MCF 10A (cell line): ENCODE measurements at regions of chr1 and their contacts with region 1.

Region 1: GRCh38 chr1:88180449-88181108 is 503.5 kb upstream of the PKN2 start:
- DNase-seq: peak; percentile 77
- H3K4me3 Mint-ChIP-seq: no peak overlapping the region
- H3K27ac Mint-ChIP-seq: no peak overlapping the region
- H3K4me1 Mint-ChIP-seq: peaks cover 6% of the 10 kb centered on the region
- H3K27me3 Mint-ChIP-seq: peaks cover 47% of the 10 kb centered on the region
- CTCF ChIP-seq: peak; percentile 89

Region 2: DNA sequence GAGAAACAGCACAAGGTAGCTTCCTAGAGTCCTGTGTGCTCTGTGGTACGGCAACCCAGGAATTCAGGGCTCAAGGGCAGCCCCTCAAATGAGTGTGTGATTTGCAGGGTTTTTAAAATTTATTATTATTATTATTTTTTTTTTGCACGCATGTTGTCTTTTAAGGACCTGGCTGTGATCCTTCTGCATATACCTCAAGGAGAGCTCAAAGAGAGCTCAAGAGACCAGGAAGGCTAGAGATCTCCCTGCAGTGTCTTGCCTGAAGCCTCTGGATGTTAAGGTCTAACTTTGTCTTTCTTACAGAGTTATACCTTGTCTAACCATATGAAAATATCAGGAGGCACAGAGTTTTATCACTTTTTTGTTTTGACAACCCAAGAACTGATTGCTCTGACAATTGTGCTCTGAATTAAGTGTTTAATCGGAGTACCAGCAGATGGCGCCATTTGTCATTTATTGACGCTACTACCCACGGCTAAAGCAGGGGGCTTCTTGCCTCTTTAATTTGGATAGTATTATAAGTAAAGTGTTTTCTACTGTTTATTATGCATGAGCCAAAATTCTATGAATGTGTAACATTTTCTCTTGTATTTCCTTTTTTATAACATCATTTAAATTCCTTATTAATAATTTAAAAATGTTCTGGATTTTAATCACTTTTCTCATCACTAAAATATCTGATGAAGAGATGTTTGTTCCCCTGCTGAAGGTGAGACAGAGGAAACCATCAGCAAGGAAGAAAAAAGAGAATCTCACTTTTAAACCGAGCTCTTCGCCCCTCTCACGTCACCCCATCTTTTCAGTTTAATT is 887.7 kb before region 1 on chr1:
- CTCF ChIA-PET with region 1: interaction called, 5 read pairs
- POLR2A ChIA-PET with region 1: no interaction called
- intact Hi-C with region 1: loop called (anchors 2 kb)
- DNase-seq: peak; percentile 69
- H3K4me3 Mint-ChIP-seq: no peak overlapping the region
- H3K27ac Mint-ChIP-seq: no peak overlapping the region
- H3K4me1 Mint-ChIP-seq: no peaks in the 10 kb centered on the region
- H3K27me3 Mint-ChIP-seq: peaks cover 25% of the 10 kb centered on the region
- CTCF ChIP-seq: peak; percentile 69

Region 3: DNA sequence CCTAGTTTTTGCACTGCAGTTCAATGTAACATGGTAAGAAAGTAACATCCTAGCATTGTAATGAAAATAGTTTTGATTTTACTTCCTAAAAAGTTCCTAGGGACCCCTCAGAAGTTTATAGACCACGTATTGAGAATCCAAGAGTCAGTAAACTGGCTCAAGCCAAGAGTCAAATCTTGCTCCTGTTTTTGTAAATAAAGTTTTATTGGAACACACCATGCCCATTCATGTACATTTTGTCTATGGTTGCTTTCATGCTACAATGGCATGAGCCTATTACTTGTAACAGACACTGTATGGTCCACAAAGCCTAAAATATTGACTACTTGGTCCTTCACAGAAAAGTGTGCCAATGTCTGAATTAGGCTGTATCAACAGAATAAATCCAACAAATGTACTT is 550.9 kb before region 1 on chr1:
- CTCF ChIA-PET with region 1: no interaction called
- POLR2A ChIA-PET with region 1: no interaction called
- intact Hi-C with region 1: no loop called
- DNase-seq: no peak
- H3K4me3 Mint-ChIP-seq: no peak overlapping the region
- H3K27ac Mint-ChIP-seq: no peak overlapping the region
- H3K4me1 Mint-ChIP-seq: no peaks in the 10 kb centered on the region
- H3K27me3 Mint-ChIP-seq: peaks cover 10% of the 10 kb centered on the region
- CTCF ChIP-seq: no peak

Region 4: DNA sequence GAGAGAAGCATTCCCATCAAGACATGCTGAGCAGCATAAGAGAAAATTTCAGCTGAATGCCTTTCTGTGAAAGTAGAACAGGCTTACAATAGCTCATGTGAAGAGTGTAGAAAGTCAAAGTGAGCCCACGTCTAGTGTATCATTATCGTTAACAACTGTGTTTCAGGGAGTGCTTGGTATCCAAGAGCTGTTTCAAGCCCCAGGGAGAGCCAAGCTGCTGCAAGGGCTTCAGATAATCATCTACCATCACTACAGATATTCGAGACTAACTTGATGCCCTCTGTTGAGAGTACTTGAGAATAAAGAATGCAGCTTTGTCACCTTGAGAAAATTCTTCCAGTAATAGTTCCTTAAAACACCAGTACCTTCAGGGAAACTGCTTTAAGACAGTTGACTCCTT is 85.1 kb before region 1 on chr1:
- CTCF ChIA-PET with region 1: no interaction called
- POLR2A ChIA-PET with region 1: no interaction called
- intact Hi-C with region 1: no loop called
- DNase-seq: no peak
- H3K4me3 Mint-ChIP-seq: no peak overlapping the region
- H3K27ac Mint-ChIP-seq: no peak overlapping the region
- H3K4me1 Mint-ChIP-seq: no peaks in the 10 kb centered on the region
- H3K27me3 Mint-ChIP-seq: no peaks in the 10 kb centered on the region
- CTCF ChIP-seq: no peak

Region 5: DNA sequence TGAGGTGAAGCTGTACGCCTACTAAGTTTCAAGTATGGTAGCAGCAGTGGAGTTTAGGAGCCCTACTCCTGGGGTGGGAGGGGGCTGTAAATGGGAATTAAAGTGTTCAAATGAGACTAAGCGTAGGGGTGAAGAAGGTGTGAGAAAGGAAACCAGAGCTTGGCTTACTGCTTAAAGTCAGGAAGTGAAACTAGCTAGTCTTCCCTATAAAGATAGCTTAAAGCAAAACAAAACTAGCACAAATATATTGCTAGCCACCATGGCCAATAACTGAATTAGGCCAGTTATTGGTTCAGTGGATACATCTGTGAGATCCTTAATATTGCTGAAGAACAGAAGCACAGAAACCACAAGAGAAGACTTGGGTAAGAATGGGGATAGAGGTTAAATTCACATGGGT is 11.3 kb after region 1 on chr1:
- CTCF ChIA-PET with region 1: interaction called, 16 read pairs
- POLR2A ChIA-PET with region 1: no interaction called
- intact Hi-C with region 1: no loop called
- DNase-seq: no peak
- H3K4me3 Mint-ChIP-seq: no peak overlapping the region
- H3K27ac Mint-ChIP-seq: no peak overlapping the region
- H3K4me1 Mint-ChIP-seq: no peaks in the 10 kb centered on the region
- H3K27me3 Mint-ChIP-seq: peaks cover 23% of the 10 kb centered on the region
- CTCF ChIP-seq: no peak

Region 6: GRCh38 chr1:88247666-88248065 is 67.1 kb after region 1 on chr1:
- CTCF ChIA-PET with region 1: no interaction called
- POLR2A ChIA-PET with region 1: no interaction called
- intact Hi-C with region 1: no loop called
- DNase-seq: no peak
- H3K4me3 Mint-ChIP-seq: no peak overlapping the region
- H3K27ac Mint-ChIP-seq: no peak overlapping the region
- H3K4me1 Mint-ChIP-seq: no peaks in the 10 kb centered on the region
- H3K27me3 Mint-ChIP-seq: no peaks in the 10 kb centered on the region
- CTCF ChIP-seq: no peak

Region 7: GRCh38 chr1:88276163-88276562 is 95.6 kb after region 1 on chr1:
- CTCF ChIA-PET with region 1: no interaction called
- POLR2A ChIA-PET with region 1: no interaction called
- intact Hi-C with region 1: no loop called
- DNase-seq: peak; percentile 34
- H3K4me3 Mint-ChIP-seq: no peak overlapping the region
- H3K27ac Mint-ChIP-seq: no peak overlapping the region
- H3K4me1 Mint-ChIP-seq: peaks cover 5% of the 10 kb centered on the region
- H3K27me3 Mint-ChIP-seq: peaks cover 1% of the 10 kb centered on the region
- CTCF ChIP-seq: no peak

Region 8: DNA sequence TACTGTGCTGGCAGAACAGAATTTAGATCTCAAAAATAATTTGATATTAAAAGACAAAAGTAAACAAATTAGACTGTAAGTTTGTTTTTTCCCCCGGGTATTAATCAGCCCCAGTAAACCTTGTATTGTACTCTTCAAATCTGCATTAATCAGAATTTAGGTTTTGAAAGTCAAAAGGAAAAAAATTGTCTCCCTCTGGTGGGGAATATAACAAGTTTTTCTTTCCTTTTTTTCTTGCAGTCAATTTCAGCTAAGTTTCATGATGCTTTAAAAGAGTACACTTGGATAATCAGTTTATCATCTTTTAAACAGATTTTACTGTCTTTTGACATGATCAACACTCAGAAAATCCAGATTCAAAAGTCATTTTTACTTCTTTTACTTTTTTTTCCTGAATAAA is 369.0 kb after region 1 on chr1:
- CTCF ChIA-PET with region 1: interaction called, 3 read pairs
- POLR2A ChIA-PET with region 1: no interaction called
- intact Hi-C with region 1: loop called (anchors 2 kb)
- DNase-seq: peak; percentile 27
- H3K4me3 Mint-ChIP-seq: no peak overlapping the region
- H3K27ac Mint-ChIP-seq: no peak overlapping the region
- H3K4me1 Mint-ChIP-seq: no peaks in the 10 kb centered on the region
- H3K27me3 Mint-ChIP-seq: no peaks in the 10 kb centered on the region
- CTCF ChIP-seq: no peak

Region 9: DNA sequence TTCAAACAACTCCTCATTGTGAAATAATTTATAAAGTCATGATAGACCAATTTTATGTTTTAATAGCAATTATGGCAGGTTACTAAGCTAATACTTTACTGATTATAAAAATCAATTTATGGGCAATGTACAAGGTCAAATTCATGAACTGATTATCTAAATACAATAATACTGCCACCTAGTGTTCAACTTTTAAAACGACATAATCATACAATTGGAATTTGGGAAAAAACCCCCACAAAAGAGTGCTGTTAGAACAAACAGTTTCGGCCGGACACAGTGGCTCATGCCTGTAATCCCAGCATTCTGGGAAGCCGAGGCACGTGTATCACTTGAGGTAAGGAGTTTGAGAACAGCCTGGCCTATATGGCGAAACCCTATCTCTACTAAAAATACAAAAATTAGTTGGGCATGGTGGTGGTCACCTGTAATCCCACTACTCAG is 696.8 kb after region 1 on chr1:
- CTCF ChIA-PET with region 1: no interaction called
- POLR2A ChIA-PET with region 1: no interaction called
- intact Hi-C with region 1: loop called (anchors 5 kb)
- DNase-seq: peak; percentile 36
- H3K4me3 Mint-ChIP-seq: no peak overlapping the region
- H3K27ac Mint-ChIP-seq: no peak overlapping the region
- H3K4me1 Mint-ChIP-seq: peaks cover 15% of the 10 kb centered on the region
- H3K27me3 Mint-ChIP-seq: no peaks in the 10 kb centered on the region
- CTCF ChIP-seq: peak; percentile 40